OCI-LY7 (cell line): ENCODE measurements at regions of chr12 and their contacts with region 1.

Region 1: DNA sequence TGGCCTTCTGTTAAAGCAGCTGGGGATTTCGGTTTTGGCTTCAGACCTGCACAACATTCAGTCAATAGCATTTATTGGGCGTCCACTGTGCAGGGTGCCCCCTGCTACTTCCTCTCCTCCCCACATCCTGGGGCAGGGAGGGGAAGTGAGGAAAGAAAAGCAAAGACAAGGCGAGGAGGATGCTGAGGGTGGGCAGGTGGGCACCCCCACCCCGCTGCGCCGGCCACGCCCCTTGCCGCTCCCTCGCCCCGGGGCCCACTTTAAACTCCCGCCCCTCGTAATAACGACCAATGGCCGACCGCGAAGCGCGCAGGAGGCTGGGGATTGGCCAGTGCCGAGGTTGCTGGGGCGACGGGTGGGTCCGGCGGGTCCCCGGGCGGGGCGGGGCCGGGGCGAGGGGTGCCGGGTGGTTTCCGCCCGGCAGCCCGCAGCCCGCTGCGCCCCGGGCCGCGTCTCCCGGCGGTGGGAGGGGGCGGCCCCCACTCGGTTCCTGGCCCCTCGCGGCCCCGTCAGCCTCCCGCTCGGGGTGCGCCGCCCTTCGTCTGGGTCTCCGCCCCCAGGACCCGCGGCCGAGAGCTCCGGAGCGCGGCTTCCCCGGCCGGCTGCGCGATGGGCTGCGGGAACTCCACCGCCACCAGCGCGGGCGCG is at the start of gene C12orf75:
- DNase-seq: peak; percentile 95
- H3K4me3 ChIP-seq: peak within 1 kb of the TSS; percentile 92
- H3K27ac ChIP-seq: peak within 1 kb of the TSS; percentile 91
- H3K4me1 ChIP-seq: peaks cover 78% of the 10 kb centered on the region
- CTCF ChIP-seq: no peak
- total RNA-seq, gene C12orf75: 147 and 174 TPM in 2 replicates

Region 2: DNA sequence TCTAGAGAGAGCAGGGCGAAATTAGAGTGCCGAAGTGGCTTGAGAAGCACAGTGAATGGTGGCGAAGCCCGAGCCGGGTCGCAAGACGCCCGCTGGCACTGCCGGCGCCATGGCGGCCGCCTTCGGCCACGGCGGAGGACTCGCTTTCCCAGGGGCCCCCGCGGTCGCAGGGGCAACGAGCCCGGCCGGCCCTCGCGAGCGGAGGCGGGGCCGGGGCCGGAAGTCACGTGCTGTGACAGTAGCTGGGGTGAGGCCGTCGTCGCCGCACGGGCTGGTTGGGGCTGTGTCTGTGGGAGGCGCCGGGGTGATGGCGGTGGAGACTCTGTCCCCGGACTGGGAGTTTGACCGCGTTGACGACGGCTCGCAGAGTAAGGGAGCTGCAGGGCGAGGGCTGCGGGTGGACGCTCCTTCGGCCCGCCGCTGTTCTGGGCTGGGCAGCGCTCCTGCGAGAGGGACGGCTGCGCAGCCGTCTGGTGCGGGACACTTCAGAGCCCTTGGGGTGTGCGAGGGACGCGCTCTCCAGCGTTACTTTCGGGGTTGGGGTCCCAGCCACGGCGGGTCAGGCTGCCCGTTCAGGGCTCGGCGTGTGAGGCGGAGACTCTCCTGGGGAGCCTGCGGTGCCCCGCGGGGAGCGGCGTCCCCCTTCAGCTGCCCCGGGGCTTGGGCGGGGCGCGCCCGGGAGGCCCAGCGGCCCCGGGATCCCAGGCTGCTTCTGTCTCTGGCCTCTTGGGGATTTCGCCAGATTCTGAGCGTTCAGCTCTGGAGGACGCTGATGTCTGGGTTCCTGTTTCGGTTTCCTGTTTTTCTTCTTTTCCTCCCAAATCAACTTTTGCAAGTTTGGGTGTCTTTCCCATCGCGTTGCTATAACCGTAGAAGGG is 222.7 kb before region 1 on chr12 and contains the start of gene WASHC4:
- CTCF ChIA-PET with region 1: no interaction called
- POLR2A ChIA-PET with region 1: no interaction called
- intact Hi-C with region 1: loop called (anchors 5 kb)
- DNase-seq: peak; percentile 95
- H3K4me3 ChIP-seq: peak within 1 kb of the TSS; percentile 99
- H3K27ac ChIP-seq: peak within 1 kb of the TSS; percentile 96
- H3K4me1 ChIP-seq: peaks cover 36% of the 10 kb centered on the region
- CTCF ChIP-seq: no peak
- total RNA-seq, gene WASHC4: 54.8 and 63.6 TPM in 2 replicates

Region 3: GRCh38 chr12:105319691-105320209 is 10.7 kb before region 1 on chr12:
- CTCF ChIA-PET with region 1: interaction called, 12 read pairs
- POLR2A ChIA-PET with region 1: interaction called, 54 read pairs
- intact Hi-C with region 1: no loop called
- DNase-seq: peak; percentile 73
- H3K4me3 ChIP-seq: no peak overlapping the region
- H3K27ac ChIP-seq: no peak overlapping the region
- H3K4me1 ChIP-seq: peaks cover 53% of the 10 kb centered on the region
- CTCF ChIP-seq: peak; percentile 69

Region 4: DNA sequence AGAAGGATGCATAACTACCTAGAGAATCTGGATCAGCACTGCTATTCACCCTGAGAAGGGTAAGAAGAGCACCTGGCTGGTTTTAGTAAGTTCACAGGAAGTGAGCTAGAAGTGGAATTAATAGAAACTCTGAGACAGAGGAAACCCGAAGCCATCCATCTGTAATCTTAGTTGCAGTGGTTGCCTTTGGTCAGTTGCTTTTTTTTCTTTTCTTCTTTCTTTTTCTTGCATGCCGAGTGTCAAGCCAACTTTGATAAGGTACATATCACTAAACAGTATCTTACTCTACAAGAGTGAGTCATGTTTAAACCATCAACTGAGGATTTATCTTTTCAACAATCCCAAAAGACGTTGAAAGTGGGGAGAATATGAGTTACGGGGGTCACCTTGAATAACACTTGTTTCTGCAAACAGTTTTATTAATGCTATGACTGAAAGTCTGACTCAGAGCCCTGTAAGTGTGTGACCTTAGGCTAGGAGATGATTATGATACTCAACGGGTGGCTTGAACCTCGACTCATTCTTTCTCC is 26.8 kb after region 1 on chr12:
- CTCF ChIA-PET with region 1: interaction called, 5 read pairs
- POLR2A ChIA-PET with region 1: interaction called, 157 read pairs
- intact Hi-C with region 1: loop called (anchors 1 kb)
- DNase-seq: peak; percentile 88
- H3K4me3 ChIP-seq: peak overlapping the region; percentile 64
- H3K27ac ChIP-seq: peak overlapping the region; percentile 95
- H3K4me1 ChIP-seq: peaks cover 80% of the 10 kb centered on the region
- CTCF ChIP-seq: no peak